K562 (cell line): ENCODE measurements at regions of chr22 and their contacts with region 1.

Region 1: GRCh38 chr22:42079319-42080251 is at the start of gene SMDT1:
- DNase-seq: peak; percentile 89 to 98 (median 94)
- ATAC-seq: peak; percentile 96
- H3K4me3 ChIP-seq: peak within 1 kb of the TSS; percentile 59
- H3K27ac ChIP-seq: peak within 1 kb of the TSS; percentile 95
- H3K4me1 ChIP-seq: peaks cover 11 to 18% of the 10 kb centered on the region in 2 experiments
- H3K27me3 ChIP-seq: no peaks in the 10 kb centered on the region
- CTCF ChIP-seq: no peak
- EP300 ChIP-seq: no peak
- POLR2A ChIP-seq: peak; percentile 89
- RAD21 ChIP-seq: no peak
- polyA plus RNA-seq, gene SMDT1: 11.7 to 20.3 TPM

Region 2: DNA sequence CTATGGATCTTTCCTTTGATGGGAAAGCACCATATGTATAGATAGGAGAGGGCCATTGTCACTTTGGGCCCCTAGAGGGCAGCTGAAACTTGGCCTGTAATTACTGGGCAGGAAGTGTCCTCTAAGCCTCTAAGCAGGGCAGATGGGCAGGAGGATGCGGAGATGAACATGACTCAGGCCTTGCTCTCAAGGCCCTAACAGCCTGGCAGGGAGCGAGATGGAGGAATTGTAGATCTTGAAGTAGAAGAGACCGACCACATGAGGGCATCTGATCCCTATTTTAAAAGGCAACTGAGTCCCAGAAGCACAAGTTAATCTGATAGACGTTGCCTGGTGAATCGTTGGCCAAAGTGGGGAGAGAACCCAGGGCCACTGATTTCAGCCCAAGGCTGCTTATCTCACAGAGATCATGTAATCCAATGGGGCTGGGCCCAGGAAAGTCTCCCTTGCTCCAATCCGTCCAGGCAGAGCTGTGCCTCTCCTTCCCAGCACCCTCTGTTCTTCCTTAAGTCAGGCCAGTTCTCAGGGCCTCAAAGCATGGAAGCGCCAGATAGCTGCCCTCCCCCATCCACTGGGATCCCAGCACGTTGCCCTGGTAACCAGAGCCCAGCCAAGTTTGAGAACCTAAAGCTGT is 112.9 kb before region 1 on chr22:
- CTCF ChIA-PET with region 1: no interaction called
- POLR2A ChIA-PET with region 1: no interaction called
- in situ Hi-C with region 1: no loop called
- intact Hi-C with region 1: loop called (anchors 10 kb)
- DNase-seq: peak; percentile 21 to 51 (median 31)
- ATAC-seq: peak; percentile 68
- H3K4me3 ChIP-seq: no peak overlapping the region
- H3K27ac ChIP-seq: no peak overlapping the region
- H3K4me1 ChIP-seq: peaks cover 4 to 11% of the 10 kb centered on the region in 2 experiments; a peak in 4 of 5 replicates
- H3K27me3 ChIP-seq: peaks cover 0 to 11% of the 10 kb centered on the region in 2 experiments; a peak in 1 of 5 replicates
- CTCF ChIP-seq: peak; percentile 35 to 44 (median 39); a peak in 5 of 6 replicates
- EP300 ChIP-seq: no peak
- POLR2A ChIP-seq: no peak
- RAD21 ChIP-seq: peak in 1 of 2 experiments; percentile 49; a peak in 2 of 4 replicates

Region 3: DNA sequence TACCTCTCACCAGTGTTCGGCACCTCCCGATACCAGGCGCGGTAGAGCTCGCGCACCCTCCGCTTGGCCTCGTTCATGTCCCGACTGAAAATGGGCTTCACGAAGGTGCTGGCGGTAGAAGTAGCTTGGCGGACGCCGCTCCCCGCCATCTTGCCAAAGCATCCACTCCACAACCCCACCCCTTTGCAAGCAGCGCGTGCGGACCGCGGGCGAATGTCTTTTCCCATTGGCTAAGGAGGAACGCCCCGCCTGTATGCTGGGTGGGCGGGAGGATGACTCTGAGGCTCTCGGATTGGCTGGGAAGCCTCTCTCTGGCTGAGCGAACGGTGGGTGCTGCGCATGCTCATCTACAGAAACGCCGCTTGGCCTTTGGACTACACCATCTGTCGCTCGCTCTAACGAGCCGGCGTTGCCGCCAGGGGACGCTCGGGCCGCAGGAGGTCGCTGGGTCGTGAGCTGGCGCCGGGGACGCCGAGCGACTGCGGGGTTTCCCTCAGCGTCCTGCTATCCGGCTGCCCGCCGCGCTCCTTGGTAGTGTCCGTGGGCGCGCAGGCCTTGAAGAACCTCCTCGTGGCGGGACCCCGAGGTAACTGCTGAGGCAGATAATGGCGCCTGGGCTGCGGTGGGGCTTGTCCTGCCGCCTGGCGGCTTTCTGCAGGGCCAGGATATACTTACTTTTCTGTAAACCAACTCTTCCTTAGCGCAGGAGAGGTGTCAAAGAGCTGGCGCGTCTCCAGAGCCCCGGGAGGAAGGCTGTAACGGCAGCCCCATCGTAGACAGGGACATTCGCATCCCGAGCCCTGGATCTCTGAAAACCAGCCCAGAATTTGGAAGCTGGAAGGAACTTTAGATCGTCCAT is 11.2 kb after region 1 on chr22 and contains the start of gene NDUFA6:
- CTCF ChIA-PET with region 1: no interaction called
- POLR2A ChIA-PET with region 1: interaction called, 43 read pairs
- in situ Hi-C with region 1: no loop called
- intact Hi-C with region 1: no loop called
- DNase-seq: peak; percentile 93 to 97 (median 95)
- ATAC-seq: peak; percentile 97
- H3K4me3 ChIP-seq: peak within 1 kb of the TSS; percentile 96
- H3K27ac ChIP-seq: peak within 1 kb of the TSS; percentile 100
- H3K4me1 ChIP-seq: peaks cover 4 to 8% of the 10 kb centered on the region in 2 experiments; a peak in 3 of 5 replicates
- H3K27me3 ChIP-seq: no peaks in the 10 kb centered on the region
- CTCF ChIP-seq: peak; percentile 89 to 92 (median 90)
- EP300 ChIP-seq: no peak
- POLR2A ChIP-seq: peak; percentile 95
- RAD21 ChIP-seq: peak; percentile 77 to 89
- polyA plus RNA-seq, gene NDUFA6: 465 to 474 TPM

Region 4: GRCh38 chr22:42114721-42115120 is 35.1 kb after region 1 on chr22:
- CTCF ChIA-PET with region 1: no interaction called
- POLR2A ChIA-PET with region 1: no interaction called
- in situ Hi-C with region 1: no loop called
- intact Hi-C with region 1: no loop called
- DNase-seq: peak in 1 of 4 experiments; percentile 21
- ATAC-seq: no peak
- H3K4me3 ChIP-seq: no peak overlapping the region
- H3K27ac ChIP-seq: no peak overlapping the region
- H3K4me1 ChIP-seq: peaks cover 0 to 4% of the 10 kb centered on the region in 2 experiments; a peak in 2 of 5 replicates
- H3K27me3 ChIP-seq: no peaks in the 10 kb centered on the region
- CTCF ChIP-seq: peak; percentile 16 to 35 (median 32); a peak in 4 of 6 replicates
- EP300 ChIP-seq: no peak
- POLR2A ChIP-seq: no peak
- RAD21 ChIP-seq: no peak

Region 5: GRCh38 chr22:42214633-42215415 is 135.2 kb after region 1 on chr22:
- CTCF ChIA-PET with region 1: no interaction called
- POLR2A ChIA-PET with region 1: no interaction called
- in situ Hi-C with region 1: no loop called
- intact Hi-C with region 1: no loop called
- DNase-seq: no peak
- ATAC-seq: no peak
- H3K4me3 ChIP-seq: no peak overlapping the region
- H3K27ac ChIP-seq: no peak overlapping the region
- H3K4me1 ChIP-seq: peaks cover 6% of the 10 kb centered on the region in 2 experiments; a peak in 3 of 5 replicates
- H3K27me3 ChIP-seq: no peaks in the 10 kb centered on the region
- CTCF ChIP-seq: no peak
- EP300 ChIP-seq: no peak
- POLR2A ChIP-seq: no peak
- RAD21 ChIP-seq: no peak